ENCODE measurements at regions of chr19 and their contacts with region 1.

Region 1: GRCh38 chr19:50290011-50290410 is 39.2 kb downstream of the KCNC3 start:
- DNase-seq: peak; percentile 29
- ATAC-seq: no peak
- H3K4me3 Mint-ChIP-seq: no peak overlapping the region
- H3K27ac Mint-ChIP-seq: no peak overlapping the region
- H3K4me1 Mint-ChIP-seq: peaks cover 26% of the 10 kb centered on the region
- H3K27me3 Mint-ChIP-seq: no peaks in the 10 kb centered on the region; the same call in 1 of the 2 replicates
- CTCF ChIP-seq: no peak

Region 2: DNA sequence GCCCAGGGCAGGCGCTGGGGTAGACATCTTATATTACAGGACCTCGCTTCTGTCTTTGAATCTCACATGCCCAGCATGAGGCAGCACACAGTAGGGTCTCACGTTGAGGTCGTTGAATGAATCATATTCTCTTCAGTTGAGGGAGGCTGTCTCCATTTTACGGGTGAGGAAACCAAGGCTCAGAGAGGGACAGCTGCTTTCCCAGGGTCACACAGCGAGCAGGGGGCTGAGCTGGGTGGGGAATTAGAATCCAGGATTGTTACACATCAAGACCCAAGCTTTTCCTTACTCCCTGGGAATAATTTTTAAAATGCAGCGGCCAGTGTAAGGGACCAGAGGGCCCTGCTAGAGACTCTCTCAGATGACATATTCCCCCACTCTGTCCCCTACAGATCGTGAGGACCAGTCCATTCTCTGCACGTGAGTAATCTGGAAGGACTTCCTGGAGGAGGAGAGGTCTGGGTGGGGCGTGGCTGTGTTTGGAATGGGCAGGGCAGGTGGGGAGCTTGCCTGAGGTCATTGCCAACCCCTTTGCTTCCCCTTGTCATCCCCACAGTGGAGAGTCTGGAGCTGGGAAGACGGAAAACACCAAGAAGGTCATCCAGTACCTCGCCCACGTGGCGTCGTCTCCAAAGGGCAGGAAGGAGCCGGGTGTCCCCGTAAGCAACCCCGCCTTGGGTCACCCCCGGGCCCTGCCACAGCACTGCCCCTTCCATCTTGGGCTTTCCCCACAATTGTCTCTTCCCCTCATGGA is 67.1 kb before region 1 on chr19:
- CTCF ChIA-PET with region 1: no interaction called
- POLR2A ChIA-PET with region 1: no interaction called
- DNase-seq: no peak
- ATAC-seq: no peak
- H3K4me3 Mint-ChIP-seq: no peak overlapping the region
- H3K27ac Mint-ChIP-seq: no peak overlapping the region
- H3K4me1 Mint-ChIP-seq: no peaks in the 10 kb centered on the region
- H3K27me3 Mint-ChIP-seq: no peaks in the 10 kb centered on the region
- CTCF ChIP-seq: no peak

Region 3: DNA sequence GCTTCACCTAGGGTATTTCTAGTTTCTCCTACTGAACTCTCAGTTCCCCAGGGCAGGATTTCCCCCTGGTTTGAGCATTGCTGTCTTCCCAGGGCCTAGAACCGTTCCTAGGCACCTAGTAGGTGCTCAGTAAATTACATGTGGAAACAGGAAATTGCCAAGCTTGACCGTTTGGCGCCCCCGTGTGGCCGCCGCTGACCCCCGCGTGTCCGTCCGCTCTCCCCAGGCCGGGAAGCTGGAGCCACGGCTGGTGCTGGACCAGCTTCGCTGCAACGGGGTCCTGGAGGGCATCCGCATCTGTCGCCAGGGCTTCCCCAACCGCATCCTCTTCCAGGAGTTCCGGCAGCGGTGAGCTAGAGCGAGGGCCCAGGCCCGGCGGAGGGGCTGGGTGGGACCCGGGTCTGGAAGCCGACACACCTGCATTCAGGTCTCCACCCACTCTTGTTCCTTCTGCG is 31.1 kb before region 1 on chr19:
- CTCF ChIA-PET with region 1: interaction called, 15 read pairs
- POLR2A ChIA-PET with region 1: no interaction called
- DNase-seq: peak; percentile 84
- ATAC-seq: peak; percentile 89
- H3K4me3 Mint-ChIP-seq: no peak overlapping the region
- H3K27ac Mint-ChIP-seq: no peak overlapping the region
- H3K4me1 Mint-ChIP-seq: no peaks in the 10 kb centered on the region
- H3K27me3 Mint-ChIP-seq: peaks cover 4% of the 10 kb centered on the region; the same call in 1 of the 2 replicates
- CTCF ChIP-seq: peak; percentile 89

Region 4: GRCh38 chr19:50266896-50267295 is 23.1 kb before region 1 on chr19:
- CTCF ChIA-PET with region 1: interaction called, 11 read pairs
- POLR2A ChIA-PET with region 1: no interaction called
- DNase-seq: peak; percentile 96
- ATAC-seq: peak; percentile 99
- H3K4me3 Mint-ChIP-seq: peak overlapping the region; percentile 32
- H3K27ac Mint-ChIP-seq: no peak overlapping the region
- H3K4me1 Mint-ChIP-seq: peaks cover 8% of the 10 kb centered on the region
- H3K27me3 Mint-ChIP-seq: no peaks in the 10 kb centered on the region
- CTCF ChIP-seq: no peak

Region 5: DNA sequence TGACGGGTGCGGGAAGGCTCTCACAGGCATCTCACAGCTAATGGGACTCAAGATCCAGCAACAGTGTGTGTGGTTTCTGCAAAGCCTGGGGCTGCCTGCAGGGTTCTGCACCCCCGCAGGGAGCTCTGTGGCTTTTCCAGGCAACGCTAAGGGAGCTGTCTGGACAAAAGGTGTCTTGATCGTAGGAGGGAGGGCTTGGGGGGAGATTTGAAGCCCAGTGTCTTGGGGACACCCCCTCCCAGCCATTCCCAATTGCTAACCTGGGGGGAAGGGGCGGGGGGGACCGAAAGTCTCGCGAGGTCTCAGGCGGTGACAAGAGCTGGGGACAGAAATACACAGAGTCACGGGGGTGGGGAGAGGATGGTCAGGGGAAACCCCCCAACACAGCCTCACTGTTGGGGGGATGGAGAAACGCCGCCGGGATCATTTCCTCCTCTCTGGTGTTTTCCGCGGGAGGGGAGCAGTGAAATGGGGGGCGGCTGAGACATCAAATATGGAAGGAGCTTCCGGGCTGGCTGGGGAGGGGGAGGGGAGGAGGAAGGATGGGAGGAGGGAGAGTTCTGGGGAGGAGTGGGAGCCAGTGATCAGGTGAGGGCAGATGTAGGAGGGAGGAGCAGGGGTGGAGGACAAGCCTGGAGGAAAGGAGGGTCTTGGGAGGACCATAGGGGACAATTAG is 25.9 kb after region 1 on chr19:
- CTCF ChIA-PET with region 1: interaction called, 16 read pairs
- POLR2A ChIA-PET with region 1: interaction called, 8 read pairs
- DNase-seq: peak; percentile 75
- ATAC-seq: peak; percentile 24
- H3K4me3 Mint-ChIP-seq: peak overlapping the region; percentile 82
- H3K27ac Mint-ChIP-seq: peak overlapping the region; percentile 98
- H3K4me1 Mint-ChIP-seq: peaks cover 30% of the 10 kb centered on the region
- H3K27me3 Mint-ChIP-seq: peaks cover 6% of the 10 kb centered on the region
- CTCF ChIP-seq: no peak

Measured in WTC11 (cell line).